RWPE1 (cell line): ENCODE measurements at regions of chr2 and their contacts with region 1.

Region 1: GRCh38 chr2:39059366-39059952 is 61.4 kb downstream of the SOS1 start:
- DNase-seq: peak; percentile 25
- H3K27ac ChIP-seq: no peak overlapping the region
- CTCF ChIP-seq: peak; percentile 72

Region 2: DNA sequence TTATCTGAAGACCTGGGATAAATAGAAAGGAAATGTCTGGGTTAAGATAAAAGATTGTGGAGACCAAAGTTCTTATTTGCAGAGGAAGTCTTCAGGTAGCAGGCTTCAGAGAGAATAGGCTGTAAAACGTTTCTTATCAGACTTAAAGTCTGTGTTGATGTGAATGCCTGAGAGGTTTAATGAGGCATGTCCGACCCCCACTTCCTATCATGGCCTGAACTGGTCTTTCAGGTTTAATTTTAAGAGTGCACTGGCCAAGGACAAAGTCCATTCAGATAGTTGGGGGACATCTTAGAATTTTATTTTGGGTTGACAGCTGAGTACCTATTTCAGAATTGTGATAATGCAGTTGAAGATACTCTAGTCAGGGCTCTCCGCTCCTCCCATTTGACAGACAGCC is 774.5 kb before region 1 on chr2:
- CTCF ChIA-PET with region 1: no interaction called
- POLR2A ChIA-PET with region 1: no interaction called
- DNase-seq: no peak
- H3K27ac ChIP-seq: no peak overlapping the region
- CTCF ChIP-seq: no peak

Region 3: DNA sequence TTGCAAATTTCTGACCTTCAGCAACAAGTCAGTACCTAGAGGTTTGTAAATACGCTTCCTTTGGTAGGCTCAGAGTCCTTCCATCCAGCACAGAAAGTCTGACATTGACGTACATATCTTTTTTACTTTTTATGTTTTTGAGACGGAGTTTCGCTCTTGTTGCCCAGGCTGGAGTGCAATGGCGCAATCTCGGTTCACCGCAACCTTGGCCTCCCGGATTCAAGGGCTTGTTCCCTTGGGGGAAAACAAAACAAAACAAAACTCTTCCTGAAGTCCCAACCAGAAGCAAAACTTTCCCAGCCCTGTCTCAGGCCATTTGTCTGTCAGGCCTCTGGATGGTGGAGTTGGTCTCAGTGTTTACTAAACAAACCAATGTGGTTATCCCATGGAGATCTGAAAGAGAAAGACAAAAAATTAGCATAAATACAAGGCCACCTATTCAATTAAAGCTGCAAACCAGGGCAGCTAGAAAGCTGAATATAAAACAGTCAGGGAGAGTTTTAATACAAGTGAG is 652.8 kb before region 1 on chr2:
- CTCF ChIA-PET with region 1: no interaction called
- POLR2A ChIA-PET with region 1: no interaction called
- DNase-seq: no peak
- H3K27ac ChIP-seq: no peak overlapping the region
- CTCF ChIP-seq: no peak

Region 4: GRCh38 chr2:39024833-39025232 is 34.6 kb before region 1 on chr2:
- CTCF ChIA-PET with region 1: no interaction called
- POLR2A ChIA-PET with region 1: no interaction called
- DNase-seq: peak; percentile 50
- H3K27ac ChIP-seq: no peak overlapping the region
- CTCF ChIP-seq: no peak

Region 5: DNA sequence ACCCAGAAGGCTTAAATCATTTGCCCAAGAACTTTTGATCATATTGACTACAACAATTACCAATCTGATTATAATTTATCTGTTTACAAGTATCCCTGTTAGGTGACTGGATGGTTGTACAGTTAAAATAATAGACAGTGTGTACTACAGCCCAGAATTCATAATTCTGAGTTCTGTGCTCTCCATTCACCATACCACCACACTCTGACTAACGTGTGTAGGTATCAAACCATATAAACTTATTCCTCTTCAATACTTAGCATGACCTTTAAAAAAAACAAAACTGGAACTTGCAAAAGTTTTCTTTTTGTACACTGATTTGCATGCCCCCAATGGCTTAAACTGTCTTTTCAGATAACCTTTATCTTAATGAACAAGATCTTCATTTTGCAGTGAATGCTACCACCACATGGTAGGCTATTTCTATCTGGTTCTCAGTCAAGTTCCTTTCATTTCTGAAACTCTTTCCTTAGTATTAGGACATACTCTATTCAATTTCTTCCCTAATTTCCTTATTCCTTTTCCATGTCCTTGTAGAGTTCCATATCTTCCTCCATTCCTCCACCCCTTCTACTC is 10.5 kb after region 1 on chr2:
- CTCF ChIA-PET with region 1: no interaction called
- POLR2A ChIA-PET with region 1: no interaction called
- DNase-seq: no peak
- H3K27ac ChIP-seq: no peak overlapping the region
- CTCF ChIP-seq: no peak

Region 6: GRCh38 chr2:39227628-39228412 is 168.4 kb after region 1 on chr2:
- CTCF ChIA-PET with region 1: interaction called, 18 read pairs
- POLR2A ChIA-PET with region 1: no interaction called
- DNase-seq: peak; percentile 68
- H3K27ac ChIP-seq: no peak overlapping the region
- CTCF ChIP-seq: peak; percentile 92